H1 (cell line): ENCODE measurements at regions of chr1 and their contacts with region 1.

Region 1: GRCh38 chr1:223639331-223639749 is 26.2 kb downstream of the CAPN8 start:
- DNase-seq: no peak
- H3K4me3 ChIP-seq: no peak overlapping the region
- H3K27ac ChIP-seq: no peak overlapping the region
- H3K4me1 ChIP-seq: no peaks in the 10 kb centered on the region
- H3K27me3 ChIP-seq: 0 out of 7 replicates have a peak, but pooled peaks cover 0 to 2% (median 0%) of the 10 kb centered on the region in 4 experiments
- CTCF ChIP-seq: no peak
- EP300 ChIP-seq: no peak
- POLR2A ChIP-seq: no peak
- RAD21 ChIP-seq: no peak

Region 2: DNA sequence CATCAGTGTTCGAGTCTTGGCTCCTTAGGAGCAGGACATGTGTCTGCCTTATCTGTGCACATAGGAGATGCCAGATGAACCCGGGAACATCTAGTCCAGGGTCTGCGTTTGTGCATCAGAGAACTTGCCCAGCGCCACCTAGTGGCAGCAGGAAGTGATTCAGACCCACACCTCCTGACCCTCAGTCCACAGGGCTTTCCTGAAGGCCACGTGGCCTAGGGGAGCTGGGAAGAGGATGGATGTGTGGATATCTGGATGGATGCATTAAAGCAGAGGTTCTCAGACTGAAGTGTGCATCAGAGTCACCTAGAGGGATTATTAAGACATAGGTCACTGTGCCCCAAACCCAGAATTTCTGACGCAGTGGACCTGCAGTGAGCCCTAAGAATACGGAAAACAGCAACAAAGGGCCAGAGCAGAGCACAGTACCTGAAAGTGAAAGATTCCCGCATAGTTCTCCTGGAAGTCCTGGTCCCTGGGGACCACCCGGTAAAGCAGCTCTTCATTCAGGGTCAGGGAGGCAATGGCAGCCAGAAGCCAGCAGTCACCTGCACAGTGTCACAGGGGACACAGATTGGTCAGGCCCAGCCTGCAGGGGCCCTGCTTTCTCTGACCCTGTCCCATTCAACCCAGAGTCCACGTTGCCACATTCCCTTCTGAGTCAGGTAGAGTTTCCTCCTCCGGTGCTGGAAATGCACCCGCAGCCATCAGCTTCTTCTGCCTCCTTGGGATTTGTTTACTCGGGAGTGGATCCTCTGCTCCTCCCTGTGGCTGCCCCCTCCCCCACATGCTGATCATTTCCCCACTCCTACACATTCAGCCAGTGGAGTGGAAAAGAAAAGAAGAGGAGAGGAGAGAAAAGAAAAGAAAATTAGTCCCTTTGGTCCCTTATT is 10.9 kb before region 1 on chr1:
- CTCF ChIA-PET with region 1: interaction called, 10 read pairs
- POLR2A ChIA-PET with region 1: interaction called, 3 read pairs
- DNase-seq: peak; percentile 10 to 76
- H3K4me3 ChIP-seq: no peak overlapping the region
- H3K27ac ChIP-seq: no peak overlapping the region
- H3K4me1 ChIP-seq: 0 out of 7 replicates have a peak, but pooled peaks cover 0 to 4% (median 0%) of the 10 kb centered on the region in 4 experiments
- H3K27me3 ChIP-seq: no peaks in the 10 kb centered on the region
- CTCF ChIP-seq: peak; percentile 71 to 91 (median 87)
- EP300 ChIP-seq: no peak
- POLR2A ChIP-seq: no peak
- RAD21 ChIP-seq: peak; percentile 51 to 62

Region 3: DNA sequence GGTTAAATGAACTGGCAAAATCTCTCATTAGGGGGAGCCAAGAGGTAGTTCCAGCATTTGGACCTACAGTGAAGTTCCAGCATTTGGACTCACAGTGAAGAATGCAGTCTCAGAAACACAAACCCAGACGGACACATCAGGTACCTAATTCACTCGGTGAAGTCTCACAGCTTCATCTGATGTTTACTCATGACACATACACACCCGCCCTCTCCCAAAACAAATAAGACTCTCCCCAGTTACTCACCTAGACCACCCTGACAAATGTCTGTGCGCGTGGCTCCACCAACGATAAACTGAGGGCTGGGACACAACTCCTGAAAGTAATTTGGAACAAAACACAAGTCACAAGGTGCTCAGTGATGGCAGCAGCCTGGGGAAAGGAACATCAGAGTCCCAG is 14.7 kb after region 1 on chr1:
- CTCF ChIA-PET with region 1: no interaction called
- POLR2A ChIA-PET with region 1: no interaction called
- DNase-seq: no peak
- H3K4me3 ChIP-seq: no peak overlapping the region
- H3K27ac ChIP-seq: no peak overlapping the region
- H3K4me1 ChIP-seq: peaks cover 0 to 6% (median 3%) of the 10 kb centered on the region in 4 experiments; a peak in 5 of 7 replicates
- H3K27me3 ChIP-seq: peaks cover 0 to 2% (median 0%) of the 10 kb centered on the region in 4 experiments; a peak in 1 of 7 replicates
- CTCF ChIP-seq: no peak
- EP300 ChIP-seq: no peak
- POLR2A ChIP-seq: no peak
- RAD21 ChIP-seq: no peak